ENCODE measurements at regions of chr19 and their contacts with region 1.

Region 1: DNA sequence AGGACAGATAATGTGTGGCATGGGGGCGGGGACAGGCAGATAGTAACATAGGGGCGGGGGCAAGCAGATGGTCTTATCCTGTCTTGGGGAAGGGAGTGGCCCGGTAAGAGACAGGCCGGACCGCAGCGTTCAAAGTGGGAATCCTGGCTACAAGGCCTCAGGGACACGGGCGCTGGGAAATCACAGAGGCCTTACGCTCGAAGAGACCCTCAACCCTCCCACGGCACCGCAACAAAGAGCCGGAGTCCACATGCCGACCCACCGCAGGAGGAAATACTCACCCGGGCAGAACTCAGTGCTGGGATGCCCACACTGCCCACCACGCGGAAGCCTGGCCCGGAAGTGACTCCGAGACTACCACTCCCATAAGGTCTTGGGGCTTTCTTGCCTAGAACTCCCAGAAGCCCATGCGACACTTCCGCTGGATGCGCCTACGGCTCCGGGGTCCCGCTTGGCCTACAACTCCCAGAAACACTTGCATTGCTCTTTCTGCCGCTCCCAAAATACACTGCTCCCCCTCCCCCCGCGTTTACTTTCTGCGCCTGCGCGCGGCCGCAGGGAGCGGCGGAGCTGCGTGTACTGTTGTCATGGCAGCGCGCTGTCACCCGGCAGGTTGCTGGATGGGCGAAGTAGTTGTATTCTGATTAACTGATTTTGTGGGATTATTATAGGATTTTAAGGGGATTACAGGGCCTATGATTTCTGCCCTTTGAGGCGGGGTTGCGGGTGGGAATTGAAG is at the start of gene CTU1:
- DNase-seq: peak; percentile 99
- ATAC-seq: peak; percentile 97
- H3K4me3 ChIP-seq: peak within 1 kb of the TSS; percentile 63
- H3K27ac ChIP-seq: peak within 1 kb of the TSS; percentile 59
- H3K4me1 ChIP-seq: no peaks in the 10 kb centered on the region
- H3K27me3 ChIP-seq: peaks cover under 1% of the 10 kb centered on the region
- CTCF ChIP-seq: no peak
- POLR2A ChIP-seq: peak; percentile 82
- RAD21 ChIP-seq: no peak
- total RNA-seq, gene CTU1: 2.0 and 2.2 TPM in 2 replicates

Region 2: DNA sequence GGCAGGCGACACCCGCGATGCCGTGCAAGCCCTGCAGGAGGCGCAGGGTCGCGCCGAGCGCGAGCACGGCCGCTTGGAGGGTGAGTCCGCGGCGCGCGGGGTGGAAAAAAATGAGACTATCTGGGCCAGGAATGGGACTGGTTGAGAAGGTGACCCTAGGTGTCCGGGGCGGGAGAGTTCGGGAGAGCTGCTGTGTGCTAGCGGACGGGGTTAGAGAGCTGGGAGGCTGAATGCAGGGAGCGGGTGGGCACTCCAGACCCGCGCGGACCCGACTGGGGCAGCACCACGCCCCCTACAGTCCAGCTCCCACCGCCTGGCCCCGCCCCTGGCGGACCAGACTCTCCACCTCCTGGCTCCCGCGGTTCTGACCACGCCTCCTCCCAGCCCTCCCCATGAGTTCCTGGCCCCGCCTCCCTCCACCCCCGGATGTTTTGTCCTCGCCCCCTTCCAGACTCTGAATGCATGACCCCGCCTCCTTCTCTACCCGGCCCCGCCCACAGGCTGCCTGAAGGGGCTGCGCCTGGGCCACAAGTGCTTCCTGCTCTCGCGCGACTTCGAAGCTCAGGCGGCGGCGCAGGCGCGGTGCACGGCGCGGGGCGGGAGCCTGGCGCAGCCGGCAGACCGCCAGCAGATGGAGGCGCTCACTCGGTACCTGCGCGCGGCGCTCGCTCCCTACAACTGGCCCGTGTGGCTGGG is 383.6 kb before region 1 on chr19:
- CTCF ChIA-PET with region 1: no interaction called
- POLR2A ChIA-PET with region 1: no interaction called
- dilution Hi-C with region 1: no loop called
- in situ Hi-C with region 1: no loop called
- intact Hi-C with region 1: loop called (anchors 10 kb)
- DNase-seq: peak; percentile 99
- ATAC-seq: peak; percentile 86
- H3K4me3 ChIP-seq: peak overlapping the region; percentile 70
- H3K27ac ChIP-seq: peak overlapping the region; percentile 87
- H3K4me1 ChIP-seq: peaks cover 19% of the 10 kb centered on the region
- H3K27me3 ChIP-seq: no peaks in the 10 kb centered on the region
- CTCF ChIP-seq: peak; percentile 77
- POLR2A ChIP-seq: 0 out of 2 replicates have a peak, but pooled peaks have one; percentile 29
- RAD21 ChIP-seq: peak; percentile 38; the same call in 1 of the 2 replicates

Region 3: GRCh38 chr19:50804420-50805272 is 303.6 kb before region 1 on chr19:
- CTCF ChIA-PET with region 1: no interaction called
- POLR2A ChIA-PET with region 1: no interaction called
- dilution Hi-C with region 1: no loop called
- in situ Hi-C with region 1: no loop called
- intact Hi-C with region 1: loop called (anchors 10 kb)
- DNase-seq: peak; percentile 99
- ATAC-seq: peak; percentile 97
- H3K4me3 ChIP-seq: peak overlapping the region; percentile 61
- H3K27ac ChIP-seq: peak overlapping the region; percentile 98
- H3K4me1 ChIP-seq: peaks cover 3% of the 10 kb centered on the region; the same call in 1 of the 2 replicates
- H3K27me3 ChIP-seq: no peaks in the 10 kb centered on the region
- CTCF ChIP-seq: no peak
- POLR2A ChIP-seq: peak; percentile 99
- RAD21 ChIP-seq: no peak

Region 4: DNA sequence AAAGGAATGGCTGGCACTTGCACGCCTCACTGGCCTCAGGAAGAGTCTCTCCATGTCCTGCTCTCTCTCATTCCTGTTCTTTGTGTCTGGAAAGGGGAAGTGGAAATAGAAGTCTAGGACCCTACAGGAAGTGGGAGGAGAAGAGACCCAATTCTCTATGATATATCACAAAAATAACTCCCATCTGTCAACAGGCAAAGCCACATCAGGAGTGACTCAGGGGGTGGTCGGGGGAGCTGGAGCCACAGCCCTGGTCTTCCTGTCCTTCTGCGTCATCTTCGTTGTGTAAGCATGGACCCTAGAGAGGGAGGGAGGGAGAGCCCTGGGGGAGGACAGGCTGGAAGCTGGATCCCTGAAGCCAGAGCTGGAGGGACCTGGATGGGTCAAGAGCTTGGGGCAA is 19.5 kb after region 1 on chr19:
- CTCF ChIA-PET with region 1: no interaction called
- POLR2A ChIA-PET with region 1: no interaction called
- dilution Hi-C with region 1: no loop called
- in situ Hi-C with region 1: no loop called
- intact Hi-C with region 1: no loop called
- DNase-seq: peak; percentile 47
- ATAC-seq: no peak; the same call in 1 of the 2 replicates
- H3K4me3 ChIP-seq: no peak overlapping the region
- H3K27ac ChIP-seq: no peak overlapping the region
- H3K4me1 ChIP-seq: 0 out of 2 replicates have a peak, but pooled peaks cover 2% of the 10 kb centered on the region
- H3K27me3 ChIP-seq: no peaks in the 10 kb centered on the region; the same call in 1 of the 2 replicates
- CTCF ChIP-seq: no peak
- POLR2A ChIP-seq: no peak
- RAD21 ChIP-seq: no peak

Region 5: GRCh38 chr19:51168564-51169282 is 60.5 kb after region 1 on chr19:
- CTCF ChIA-PET with region 1: no interaction called
- POLR2A ChIA-PET with region 1: no interaction called
- dilution Hi-C with region 1: no loop called
- in situ Hi-C with region 1: no loop called
- intact Hi-C with region 1: loop called (anchors 2 kb)
- DNase-seq: no peak
- ATAC-seq: no peak
- H3K4me3 ChIP-seq: no peak overlapping the region
- H3K27ac ChIP-seq: no peak overlapping the region
- H3K4me1 ChIP-seq: no peaks in the 10 kb centered on the region
- H3K27me3 ChIP-seq: no peaks in the 10 kb centered on the region
- CTCF ChIP-seq: no peak
- POLR2A ChIP-seq: no peak
- RAD21 ChIP-seq: no peak

Region 6: DNA sequence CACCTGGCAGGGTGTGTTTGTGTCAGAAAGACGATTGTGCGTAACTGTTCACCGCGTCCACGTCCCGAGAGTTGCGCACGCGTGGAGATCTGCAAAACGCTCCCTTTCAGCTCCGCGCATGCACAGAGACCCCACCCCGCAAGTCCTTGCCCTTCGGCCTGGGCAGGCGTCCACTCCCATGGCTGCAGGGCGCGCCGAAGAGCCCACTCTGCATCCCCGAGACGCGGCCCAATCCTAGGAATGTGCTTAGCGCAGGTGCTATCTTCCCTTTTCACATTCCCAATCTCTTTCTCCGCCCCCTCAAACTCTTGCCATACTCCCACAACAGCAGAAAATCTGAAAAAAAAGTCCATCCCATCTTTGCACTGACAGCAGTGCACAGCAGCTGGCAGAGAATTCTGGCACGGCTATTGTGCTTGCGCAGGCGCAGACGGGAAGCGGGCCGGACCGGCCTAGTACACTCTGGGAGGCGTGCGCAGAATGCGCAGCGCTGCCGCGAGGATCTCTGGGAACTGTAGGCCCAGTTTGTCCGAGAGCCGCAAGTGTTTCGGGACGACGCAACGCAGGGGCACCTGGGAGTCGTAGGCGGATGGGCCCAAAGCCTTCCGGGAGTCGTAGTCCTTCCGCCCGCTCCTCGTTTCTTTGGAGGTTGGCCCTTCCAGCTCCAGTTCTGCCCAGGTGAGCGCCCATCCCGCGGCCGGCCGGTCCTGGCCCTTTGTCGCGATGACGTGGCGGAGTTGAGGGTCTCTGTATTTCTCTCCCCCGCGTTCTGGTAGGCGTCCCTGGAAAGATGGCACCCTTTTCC is 485.9 kb after region 1 on chr19:
- CTCF ChIA-PET with region 1: no interaction called
- POLR2A ChIA-PET with region 1: no interaction called
- dilution Hi-C with region 1: no loop called
- in situ Hi-C with region 1: no loop called
- intact Hi-C with region 1: loop called (anchors 5 kb)
- DNase-seq: peak; percentile 97
- ATAC-seq: peak; percentile 100
- H3K4me3 ChIP-seq: peak overlapping the region; percentile 66
- H3K27ac ChIP-seq: peak overlapping the region; percentile 48
- H3K4me1 ChIP-seq: peaks cover 3% of the 10 kb centered on the region; the same call in 1 of the 2 replicates
- H3K27me3 ChIP-seq: no peaks in the 10 kb centered on the region
- CTCF ChIP-seq: no peak
- POLR2A ChIP-seq: no peak
- RAD21 ChIP-seq: no peak

Measured in IMR-90 (cell line).